ENCODE measurements at regions of chr3 and their contacts with region 1.

Region 1: GRCh38 chr3:112734718-112735350 is 93.9 kb upstream of the CCDC80 start:
- DNase-seq: peak; percentile 78
- ATAC-seq: peak; percentile 96
- H3K4me3 Mint-ChIP-seq: no peak overlapping the region
- H3K27ac Mint-ChIP-seq: no peak overlapping the region; the same call in 1 of the 2 replicates
- H3K4me1 Mint-ChIP-seq: no peaks in the 10 kb centered on the region
- H3K27me3 Mint-ChIP-seq: no peaks in the 10 kb centered on the region
- CTCF ChIP-seq: peak; percentile 81

Region 2: DNA sequence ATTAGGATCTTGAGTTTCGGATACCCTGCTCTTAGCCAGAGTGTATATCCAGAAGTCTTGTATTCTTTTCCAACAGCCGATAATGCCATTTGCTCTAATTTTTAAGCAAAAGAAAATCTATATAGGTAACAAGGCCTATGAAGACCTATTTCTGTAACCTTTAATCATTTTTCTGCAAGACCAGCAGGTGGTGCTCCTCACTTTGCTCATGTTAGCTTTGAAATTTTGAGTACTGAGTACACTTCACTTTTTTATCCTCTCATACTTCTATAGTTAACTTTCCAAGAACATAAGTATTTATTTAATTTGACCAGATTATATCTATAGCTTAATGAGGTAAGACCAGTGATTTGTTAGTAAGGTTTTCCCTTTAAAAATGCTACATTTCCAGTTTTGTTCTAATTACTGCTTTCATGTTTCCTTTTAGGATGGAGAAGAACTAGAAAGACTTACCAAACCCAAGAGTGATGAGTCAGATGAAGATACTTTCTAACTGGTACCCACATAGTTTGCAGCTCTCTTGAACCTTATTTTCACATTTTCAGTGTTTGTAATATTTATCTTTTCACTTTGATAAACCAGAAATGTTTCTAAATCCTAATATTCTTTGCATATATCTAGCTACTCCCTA is 152.5 kb before region 1 on chr3:
- CTCF ChIA-PET with region 1: interaction called, 16 read pairs
- POLR2A ChIA-PET with region 1: no interaction called
- DNase-seq: peak; percentile 26
- ATAC-seq: 0 out of 2 replicates have a peak, but pooled peaks have one; percentile 36
- H3K4me3 Mint-ChIP-seq: no peak overlapping the region
- H3K27ac Mint-ChIP-seq: no peak overlapping the region
- H3K4me1 Mint-ChIP-seq: peaks cover 18% of the 10 kb centered on the region
- H3K27me3 Mint-ChIP-seq: no peaks in the 10 kb centered on the region
- CTCF ChIP-seq: no peak

Region 3: GRCh38 chr3:112642912-112643506 is 91.8 kb before region 1 on chr3:
- CTCF ChIA-PET with region 1: interaction called, 66 read pairs
- POLR2A ChIA-PET with region 1: no interaction called
- DNase-seq: peak; percentile 86
- ATAC-seq: peak; percentile 86
- H3K4me3 Mint-ChIP-seq: peak overlapping the region; percentile 12; the same call in 1 of the 2 replicates
- H3K27ac Mint-ChIP-seq: no peak overlapping the region
- H3K4me1 Mint-ChIP-seq: peaks cover 18% of the 10 kb centered on the region
- H3K27me3 Mint-ChIP-seq: no peaks in the 10 kb centered on the region
- CTCF ChIP-seq: peak; percentile 63

Region 4: DNA sequence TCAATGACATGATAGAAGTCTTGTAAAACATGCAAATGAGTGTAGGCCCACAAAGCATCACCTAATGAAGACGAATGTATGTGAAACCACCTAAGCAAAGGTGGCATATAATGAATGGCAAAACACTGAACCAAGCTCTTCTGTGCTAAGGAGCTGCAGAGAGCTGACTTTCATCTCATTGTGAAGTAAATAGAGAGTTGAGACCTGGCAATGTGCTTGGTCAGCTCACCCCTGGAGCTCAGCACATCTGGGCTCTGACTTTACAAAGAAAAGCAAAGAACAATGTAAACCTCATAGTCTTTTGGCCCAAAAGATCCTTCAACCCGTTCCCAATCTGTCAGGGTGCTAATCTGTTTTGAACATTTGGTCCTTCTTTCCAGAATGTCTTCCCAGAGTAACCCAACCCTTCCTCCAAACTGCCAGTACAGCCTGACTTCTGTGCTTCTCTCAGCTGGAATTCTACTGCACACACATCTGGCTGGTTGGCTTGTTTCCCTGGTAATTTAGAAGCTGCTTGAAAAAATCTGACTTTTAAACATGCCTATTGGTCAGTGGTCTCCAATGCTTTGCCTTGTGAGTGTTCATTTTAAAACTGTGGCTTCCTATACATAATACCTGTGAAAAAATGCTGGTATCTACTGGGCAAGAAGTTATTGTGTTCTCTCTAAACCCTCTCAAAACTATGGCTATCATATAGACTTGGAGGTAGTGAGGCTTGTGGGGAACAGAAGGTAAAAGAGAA is 10.2 kb after region 1 on chr3:
- CTCF ChIA-PET with region 1: interaction called, 18 read pairs
- POLR2A ChIA-PET with region 1: no interaction called
- DNase-seq: no peak
- ATAC-seq: peak; percentile 55
- H3K4me3 Mint-ChIP-seq: no peak overlapping the region
- H3K27ac Mint-ChIP-seq: no peak overlapping the region
- H3K4me1 Mint-ChIP-seq: peaks cover 23% of the 10 kb centered on the region
- H3K27me3 Mint-ChIP-seq: no peaks in the 10 kb centered on the region; the same call in 1 of the 2 replicates
- CTCF ChIP-seq: no peak

Region 5: GRCh38 chr3:112761062-112761638 is 26.3 kb after region 1 on chr3:
- CTCF ChIA-PET with region 1: interaction called, 13 read pairs
- POLR2A ChIA-PET with region 1: no interaction called
- DNase-seq: no peak
- ATAC-seq: no peak
- H3K4me3 Mint-ChIP-seq: no peak overlapping the region
- H3K27ac Mint-ChIP-seq: no peak overlapping the region
- H3K4me1 Mint-ChIP-seq: peaks cover 8% of the 10 kb centered on the region
- H3K27me3 Mint-ChIP-seq: no peaks in the 10 kb centered on the region
- CTCF ChIP-seq: no peak

Region 6: DNA sequence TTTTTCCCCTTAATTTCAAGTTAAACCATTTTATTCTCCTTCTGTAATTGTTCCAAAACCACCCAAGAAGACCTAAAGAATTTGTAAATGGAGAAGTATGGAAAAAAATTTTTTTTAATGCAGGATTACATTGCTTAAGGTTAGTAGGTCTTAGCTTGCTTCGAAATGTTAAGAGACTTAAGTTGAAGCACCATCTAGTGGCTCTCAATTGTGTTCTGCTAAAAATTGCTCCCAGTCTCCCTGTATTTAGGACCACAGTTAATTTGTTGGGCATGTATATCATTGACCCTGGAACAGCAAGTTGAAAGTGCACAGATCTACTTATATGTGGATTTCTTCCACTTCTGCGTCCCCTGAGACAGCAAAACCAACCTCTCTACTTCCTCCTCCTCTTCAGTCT is 79.4 kb after region 1 on chr3:
- CTCF ChIA-PET with region 1: interaction called, 54 read pairs
- POLR2A ChIA-PET with region 1: interaction called, 3 read pairs
- DNase-seq: no peak
- ATAC-seq: peak; percentile 72
- H3K4me3 Mint-ChIP-seq: no peak overlapping the region
- H3K27ac Mint-ChIP-seq: no peak overlapping the region
- H3K4me1 Mint-ChIP-seq: peaks cover 15% of the 10 kb centered on the region
- H3K27me3 Mint-ChIP-seq: no peaks in the 10 kb centered on the region
- CTCF ChIP-seq: no peak

Region 7: GRCh38 chr3:112990672-112991602 is 256.1 kb after region 1 on chr3 and contains the start of gene GTPBP8:
- CTCF ChIA-PET with region 1: interaction called, 19 read pairs
- POLR2A ChIA-PET with region 1: no interaction called
- DNase-seq: peak; percentile 89
- ATAC-seq: peak; percentile 96
- H3K4me3 Mint-ChIP-seq: peak within 1 kb of the TSS; percentile 84
- H3K27ac Mint-ChIP-seq: peak within 1 kb of the TSS; percentile 97
- H3K4me1 Mint-ChIP-seq: peaks cover 28% of the 10 kb centered on the region
- H3K27me3 Mint-ChIP-seq: peaks cover 7% of the 10 kb centered on the region
- CTCF ChIP-seq: no peak
- total RNA-seq, gene GTPBP8: 18.6 to 19.5 TPM (median 18.6 TPM) in 3 replicates

Measured in WTC11 (cell line).